ENCODE measurements at regions of chr10 and their contacts with region 1.

Region 1: GRCh38 chr10:114876602-114877300 is 55.2 kb downstream of the FHIP2A start:
- DNase-seq: peak; percentile 57
- ATAC-seq: peak; percentile 90
- H3K4me3 ChIP-seq: peak overlapping the region; percentile 3 to 67 (median 11); a peak in 4 of 6 replicates
- H3K27ac ChIP-seq: no peak overlapping the region
- H3K4me1 ChIP-seq: peaks cover 23% of the 10 kb centered on the region
- H3K27me3 ChIP-seq: no peaks in the 10 kb centered on the region; a peak in 1 of 5 replicates
- CTCF ChIP-seq: peak; percentile 93
- EP300 ChIP-seq: no peak
- POLR2A ChIP-seq: no peak
- RAD21 ChIP-seq: peak; percentile 73

Region 2: GRCh38 chr10:114821293-114821914 is 55.3 kb before region 1 on chr10 and contains the start of gene FHIP2A:
- CTCF ChIA-PET with region 1: no interaction called
- POLR2A ChIA-PET with region 1: no interaction called
- in situ Hi-C with region 1: no loop called
- intact Hi-C with region 1: loop called (anchors 5 kb)
- DNase-seq: peak; percentile 43
- ATAC-seq: peak; percentile 94
- H3K4me3 ChIP-seq: peak within 1 kb of the TSS; percentile 80 to 89 (median 84)
- H3K27ac ChIP-seq: peak within 1 kb of the TSS; percentile 82
- H3K4me1 ChIP-seq: peaks cover 26% of the 10 kb centered on the region
- H3K27me3 ChIP-seq: no peaks in the 10 kb centered on the region; a peak in 1 of 5 replicates
- CTCF ChIP-seq: peak; percentile 52
- EP300 ChIP-seq: no peak
- POLR2A ChIP-seq: peak; percentile 21 to 28; a peak in 1 of 4 replicates
- RAD21 ChIP-seq: peak; percentile 58
- total RNA-seq, gene FHIP2A: 8.3 and 9.0 TPM in 2 replicates

Region 3: GRCh38 chr10:114937962-114938855 is 61.5 kb after region 1 on chr10 and contains the start of gene TRUB1:
- CTCF ChIA-PET with region 1: no interaction called
- POLR2A ChIA-PET with region 1: interaction called, 8 read pairs
- in situ Hi-C with region 1: no loop called
- intact Hi-C with region 1: loop called (anchors 2 kb)
- DNase-seq: peak; percentile 98
- ATAC-seq: peak; percentile 99
- H3K4me3 ChIP-seq: peak within 1 kb of the TSS; percentile 92 to 99 (median 98)
- H3K27ac ChIP-seq: peak within 1 kb of the TSS; percentile 88
- H3K4me1 ChIP-seq: peaks cover 32% of the 10 kb centered on the region
- H3K27me3 ChIP-seq: no peaks in the 10 kb centered on the region; a peak in 1 of 5 replicates
- CTCF ChIP-seq: no peak
- EP300 ChIP-seq: no peak
- POLR2A ChIP-seq: peak; percentile 89 to 92
- RAD21 ChIP-seq: peak; percentile 26; the same call in 1 of the 2 replicates
- total RNA-seq, gene TRUB1: 38.9 and 47.8 TPM in 2 replicates

Region 4: DNA sequence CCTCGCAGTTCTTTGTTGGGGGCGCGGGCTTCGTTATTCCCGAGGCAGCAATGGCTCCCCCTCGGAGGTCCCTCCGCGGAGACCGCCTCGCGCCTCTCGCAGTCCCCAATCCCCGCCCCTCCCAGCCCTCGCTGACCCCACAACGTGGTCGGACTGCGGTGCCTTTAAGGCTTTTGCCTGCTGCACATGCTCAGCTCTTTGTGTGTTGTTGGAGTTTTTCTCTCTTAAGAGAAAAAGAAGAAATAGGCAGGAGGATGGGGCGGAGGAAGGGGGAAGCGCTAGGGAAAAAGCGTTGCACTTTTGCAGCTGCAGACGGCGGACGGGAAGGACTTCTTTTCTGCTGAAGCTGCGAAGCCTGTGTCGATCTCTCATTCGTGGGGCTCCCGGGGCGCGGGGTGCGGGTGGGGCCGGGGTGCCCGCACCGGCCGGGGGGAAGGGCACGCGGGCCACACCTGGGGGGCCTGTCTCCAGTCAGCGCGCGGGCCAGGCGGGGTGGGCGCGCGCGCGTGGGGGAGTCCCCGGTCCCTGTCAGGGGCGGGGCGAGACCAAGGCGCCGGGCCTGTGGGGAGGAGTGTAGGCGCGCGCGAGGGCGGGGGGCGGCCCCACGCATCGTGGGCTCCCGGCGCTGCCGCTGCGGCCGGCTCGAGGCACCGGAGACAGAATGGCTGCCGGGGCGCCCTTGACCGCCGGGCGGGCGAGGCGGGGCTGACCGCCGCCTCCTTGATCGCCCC is 216.0 kb after region 1 on chr10:
- CTCF ChIA-PET with region 1: no interaction called
- POLR2A ChIA-PET with region 1: no interaction called
- in situ Hi-C with region 1: no loop called
- intact Hi-C with region 1: loop called (anchors 1 kb)
- DNase-seq: no peak
- ATAC-seq: peak; percentile 34
- H3K4me3 ChIP-seq: peak overlapping the region; percentile 47 to 73 (median 62); a peak in 4 of 6 replicates
- H3K27ac ChIP-seq: no peak overlapping the region
- H3K4me1 ChIP-seq: no peaks in the 10 kb centered on the region
- H3K27me3 ChIP-seq: peaks cover 3 to 26% of the 10 kb centered on the region in 2 experiments; a peak in 3 of 5 replicates
- CTCF ChIP-seq: no peak
- EP300 ChIP-seq: no peak
- POLR2A ChIP-seq: no peak
- RAD21 ChIP-seq: no peak

Region 5: GRCh38 chr10:115129752-115130151 is 253.0 kb after region 1 on chr10:
- CTCF ChIA-PET with region 1: interaction called, 30 read pairs
- POLR2A ChIA-PET with region 1: no interaction called
- in situ Hi-C with region 1: loop called (anchors 5 kb)
- intact Hi-C with region 1: loop called (anchors 1 kb)
- DNase-seq: peak; percentile 10
- ATAC-seq: no peak
- H3K4me3 ChIP-seq: no peak overlapping the region
- H3K27ac ChIP-seq: no peak overlapping the region
- H3K4me1 ChIP-seq: no peaks in the 10 kb centered on the region
- H3K27me3 ChIP-seq: no peaks in the 10 kb centered on the region
- CTCF ChIP-seq: no peak
- EP300 ChIP-seq: no peak
- POLR2A ChIP-seq: no peak
- RAD21 ChIP-seq: no peak

Region 6: GRCh38 chr10:115355162-115355760 is 478.5 kb after region 1 on chr10:
- CTCF ChIA-PET with region 1: no interaction called
- POLR2A ChIA-PET with region 1: no interaction called
- in situ Hi-C with region 1: no loop called
- intact Hi-C with region 1: loop called (anchors 10 kb)
- DNase-seq: peak; percentile 63
- ATAC-seq: peak; percentile 87
- H3K4me3 ChIP-seq: no peak overlapping the region
- H3K27ac ChIP-seq: no peak overlapping the region
- H3K4me1 ChIP-seq: no peaks in the 10 kb centered on the region
- H3K27me3 ChIP-seq: no peaks in the 10 kb centered on the region
- CTCF ChIP-seq: peak; percentile 77
- EP300 ChIP-seq: no peak
- POLR2A ChIP-seq: no peak
- RAD21 ChIP-seq: no peak

Measured in HepG2 (cell line).